ENCODE measurements at regions of chr15 and their contacts with region 1.

Region 1: DNA sequence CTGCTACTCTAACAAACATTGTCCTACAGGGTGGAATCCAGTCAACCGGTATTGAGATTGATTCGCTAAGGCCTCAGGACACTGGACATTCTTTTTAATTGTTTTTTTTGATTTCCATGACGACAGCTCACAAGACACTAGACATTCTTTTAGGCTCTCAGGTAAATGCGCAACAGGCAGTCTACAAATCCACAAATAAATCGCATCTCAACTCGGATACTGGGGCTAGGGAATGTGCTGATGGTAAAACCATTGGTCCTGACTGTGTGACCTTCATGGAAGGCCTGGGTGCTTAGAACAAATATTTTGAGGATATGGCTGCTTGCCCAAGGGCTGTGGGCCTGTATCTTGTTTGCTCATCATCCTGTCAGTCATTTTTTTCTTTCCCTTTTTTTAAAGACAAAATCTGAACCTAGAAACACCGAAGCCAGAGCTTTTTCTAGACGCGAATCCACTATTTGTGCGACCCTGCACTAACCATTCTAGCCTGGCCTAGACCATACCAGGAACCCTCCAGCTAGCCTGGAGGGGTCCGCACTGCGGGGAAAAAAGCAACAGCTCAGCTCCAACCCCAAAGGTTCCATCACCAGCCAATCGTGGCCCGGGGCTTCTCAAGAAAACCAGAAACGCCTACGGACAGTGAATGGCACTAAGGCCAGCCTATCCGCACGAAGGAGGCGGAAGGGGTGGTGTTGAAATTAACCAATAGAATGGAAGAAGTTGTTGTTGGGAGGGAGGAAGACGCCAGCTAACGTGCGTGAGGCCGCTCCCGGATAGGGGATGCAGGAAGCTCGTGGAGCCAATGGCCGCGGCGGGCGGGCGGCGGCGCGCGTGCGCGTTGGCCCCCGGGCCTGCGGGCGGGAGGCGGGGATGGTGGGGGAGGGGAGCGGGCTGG is 18.1 kb upstream of the CHD2 start:
- DNase-seq: peak; percentile 98
- ATAC-seq: peak; percentile 95

Region 2: DNA sequence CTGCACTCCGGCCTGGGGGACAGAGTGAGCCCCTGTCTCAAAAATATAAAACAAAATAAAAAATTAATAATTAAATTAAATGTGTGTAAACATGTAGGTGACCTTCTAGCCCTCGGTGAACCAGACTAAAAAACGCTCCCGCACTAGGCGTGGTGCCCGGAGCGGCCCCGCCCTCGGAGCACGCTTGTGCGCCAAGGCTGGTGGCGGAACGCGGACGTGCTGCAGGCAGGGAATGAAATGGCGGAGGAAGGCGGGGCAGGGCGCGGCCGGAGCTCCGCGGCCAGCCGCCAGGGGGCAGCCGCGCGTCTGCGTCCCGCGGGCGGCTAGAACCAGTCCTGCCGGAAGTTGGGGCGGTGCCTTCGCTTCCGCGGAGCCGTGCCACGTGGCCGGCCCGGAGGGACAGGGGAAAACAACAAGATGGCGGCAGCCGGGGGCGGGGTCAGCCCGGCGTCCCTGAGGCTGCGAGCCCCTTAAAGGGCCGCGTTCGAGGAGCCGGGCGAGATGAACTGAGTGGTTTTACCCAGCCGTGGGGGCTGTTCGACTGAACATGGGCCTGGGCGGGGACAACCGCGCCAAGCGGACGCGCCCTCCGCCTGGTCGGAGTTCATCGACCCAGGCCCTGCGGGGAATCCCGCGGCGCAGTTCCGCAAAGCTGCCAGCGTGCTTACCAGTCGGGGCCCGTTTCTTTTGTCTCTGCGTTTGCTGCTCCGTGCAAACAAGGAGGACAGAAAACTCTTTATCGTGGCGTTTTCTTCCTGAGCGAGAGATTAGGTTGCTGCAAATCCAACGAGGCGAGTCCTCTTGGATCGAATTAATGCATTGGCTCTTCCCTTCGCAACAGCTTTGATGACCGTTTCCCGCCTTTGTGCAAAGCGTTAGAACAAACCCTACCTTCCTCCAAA is 72.8 kb before region 1 on chr15:
- intact Hi-C with region 1: loop called (anchors 1 kb)
- DNase-seq: peak; percentile 100
- ATAC-seq: peak; percentile 94

Region 3: DNA sequence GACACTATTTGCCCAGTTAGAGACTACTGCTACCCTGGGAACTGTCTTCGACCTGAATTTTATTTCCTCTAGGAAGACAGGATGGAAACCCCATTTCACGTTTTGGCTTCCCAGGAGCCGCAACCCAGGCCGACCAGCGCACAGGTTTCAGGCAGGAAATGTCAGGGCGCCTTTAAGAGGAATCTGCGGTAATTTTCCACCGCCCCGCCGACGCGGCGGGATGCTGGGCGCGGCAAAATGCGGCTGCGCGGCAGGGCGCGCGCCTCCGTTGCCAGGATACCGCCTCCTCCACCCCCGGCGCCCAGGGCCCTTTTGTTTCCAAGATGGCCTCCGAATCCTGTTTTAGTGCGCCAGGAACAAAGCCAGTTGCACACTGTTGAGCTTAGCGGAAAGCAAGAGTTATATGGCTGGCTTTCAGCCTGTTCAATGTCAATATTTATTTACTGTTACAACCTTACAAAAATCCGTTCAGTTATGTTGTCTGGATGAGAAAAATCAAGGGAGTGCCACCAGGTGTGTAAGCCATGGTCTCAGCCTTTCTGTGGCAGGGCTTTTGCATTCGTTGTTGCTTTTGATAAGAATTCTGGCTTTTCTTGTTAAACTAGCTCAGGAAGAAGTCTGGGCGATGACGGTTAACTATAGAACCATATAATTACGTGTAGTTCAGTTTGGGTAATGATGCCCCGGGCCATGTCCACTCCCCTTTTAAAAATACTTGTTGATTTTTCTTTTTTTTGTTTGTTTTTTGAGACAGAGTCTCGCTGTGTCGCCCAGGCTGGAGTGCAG is 61.6 kb before region 1 on chr15:
- intact Hi-C with region 1: loop called (anchors 2 kb)
- DNase-seq: peak; percentile 94
- ATAC-seq: peak; percentile 97

Region 4: GRCh38 chr15:92831655-92832328 is 50.3 kb before region 1 on chr15:
- intact Hi-C with region 1: loop called (anchors 1 kb)
- DNase-seq: peak; percentile 94
- ATAC-seq: peak; percentile 99

Region 5: DNA sequence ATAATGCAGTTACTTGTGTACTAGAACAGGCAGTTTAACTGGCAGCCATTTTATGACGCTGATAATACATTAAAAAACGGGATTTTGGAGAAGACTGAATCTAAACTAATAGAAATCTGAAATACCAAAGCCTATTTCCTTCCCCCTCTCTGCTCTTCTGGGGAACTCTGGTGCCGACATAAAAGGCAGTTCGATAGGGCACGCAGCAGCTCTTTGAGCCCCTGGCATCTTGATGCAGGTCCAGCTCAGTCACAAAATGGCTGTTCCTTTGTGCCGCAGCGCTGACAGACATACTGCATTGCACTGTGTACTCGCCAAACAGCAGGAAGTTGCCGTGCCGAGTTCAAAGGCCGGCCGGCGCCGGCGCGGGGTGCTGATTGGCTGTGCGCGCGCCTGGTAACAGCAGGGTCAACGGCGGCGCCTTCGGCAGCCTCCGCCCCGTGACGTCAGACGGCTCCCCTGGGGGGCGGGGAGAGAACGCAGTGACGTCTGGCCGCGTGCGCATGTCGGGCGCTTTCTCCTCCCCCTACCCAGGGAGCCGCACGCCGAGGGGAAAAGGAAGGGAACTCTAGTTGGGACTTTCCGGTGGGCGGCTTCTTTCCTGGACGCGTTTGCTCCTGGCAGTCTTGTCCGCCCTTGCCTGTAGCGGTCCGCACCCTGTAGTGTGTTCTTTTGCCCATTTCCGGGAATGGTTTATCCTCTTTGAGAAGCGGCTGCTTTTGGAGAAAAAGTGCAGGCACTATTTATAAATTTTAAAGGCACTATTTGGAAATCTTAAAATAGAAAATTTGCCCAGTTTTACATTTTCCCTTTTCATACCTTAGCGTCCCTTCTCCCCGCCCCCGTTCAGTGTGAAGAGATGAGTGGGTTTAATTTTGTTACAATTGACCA is 22.1 kb after region 1 on chr15:
- intact Hi-C with region 1: loop called (anchors 1 kb)
- DNase-seq: peak; percentile 99
- ATAC-seq: peak; percentile 96

Region 6: DNA sequence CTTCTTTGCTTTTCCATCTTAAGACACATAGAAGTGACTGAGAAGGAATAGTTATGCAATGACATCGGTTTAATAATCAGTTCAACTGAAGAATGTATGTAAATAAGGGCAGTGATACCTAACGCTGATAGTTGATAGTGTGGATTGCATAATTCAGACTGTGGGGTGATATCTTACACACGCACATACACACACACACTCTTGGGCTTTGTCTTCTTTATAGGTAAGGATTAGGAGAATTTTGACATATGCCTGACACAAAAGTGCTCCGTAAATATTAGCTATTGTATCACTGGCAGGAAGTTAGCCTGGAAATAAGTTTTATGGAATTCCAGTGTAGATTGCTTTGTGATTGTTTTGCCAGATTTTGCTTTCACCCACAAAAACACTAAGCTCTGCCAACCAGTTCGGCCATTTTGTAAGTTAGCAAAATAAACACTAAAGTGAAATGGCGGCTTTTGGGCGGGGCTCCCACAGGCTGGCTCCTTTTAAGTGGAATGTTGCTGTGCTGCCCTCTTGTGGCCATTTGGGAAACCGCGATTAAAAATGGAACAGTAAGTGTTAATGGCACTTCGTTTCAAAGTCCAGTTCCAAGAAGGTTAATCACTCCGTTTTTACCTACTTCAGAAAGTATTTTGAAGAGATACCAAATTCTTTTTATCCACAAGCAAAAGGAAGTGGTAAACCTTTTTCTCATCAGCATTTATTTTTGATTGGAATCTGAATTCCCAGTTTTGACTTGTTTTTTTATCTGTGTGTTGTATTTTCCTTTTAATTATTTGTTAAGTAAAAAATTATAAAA is 35.8 kb after region 1 on chr15:
- intact Hi-C with region 1: loop called (anchors 5 kb)
- DNase-seq: peak; percentile 96
- ATAC-seq: peak; percentile 58